ENCODE measurements at regions of chr6 and their contacts with region 1.

Region 1: DNA sequence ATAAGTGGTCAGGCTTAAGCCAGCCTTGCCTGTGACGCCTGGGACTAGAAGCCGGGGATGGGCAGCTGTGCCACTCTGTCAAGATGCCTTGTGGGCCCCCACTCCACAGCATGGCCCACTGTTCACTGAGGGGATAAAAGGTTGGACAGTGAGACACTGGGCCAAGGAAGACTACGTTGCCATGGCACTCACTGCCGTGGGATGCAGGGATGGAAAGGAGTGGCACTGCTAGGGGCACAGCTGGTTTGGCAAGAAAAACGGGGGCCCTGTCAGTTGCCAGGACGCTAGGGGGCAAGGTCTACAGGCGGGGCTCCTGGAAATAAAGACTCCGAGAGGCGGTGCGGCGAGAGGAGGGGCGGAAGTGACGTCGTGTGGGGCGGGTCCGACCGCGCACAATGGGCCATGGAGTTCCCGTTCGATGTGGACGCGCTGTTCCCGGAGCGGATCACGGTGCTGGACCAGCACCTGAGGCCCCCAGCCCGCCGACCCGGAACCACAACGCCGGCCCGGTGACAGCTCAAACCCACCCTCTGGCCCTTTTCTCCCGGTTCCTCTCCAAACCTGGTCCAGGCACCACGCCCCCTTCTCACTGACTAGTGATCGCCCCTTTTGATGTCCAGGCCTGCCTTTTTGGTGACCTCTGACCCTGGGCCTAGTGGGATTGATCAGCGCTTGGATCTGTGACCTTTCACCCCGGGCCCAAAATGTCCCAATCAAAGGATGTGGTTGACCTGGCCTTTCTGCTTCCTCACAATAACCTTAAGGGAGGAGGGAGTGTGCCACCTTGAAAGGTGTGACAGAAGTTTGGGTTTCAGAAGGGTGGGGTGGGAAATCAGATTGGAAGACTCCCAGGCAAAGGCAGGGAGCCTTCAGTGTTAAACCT is at the start of gene ATAT1:
- DNase-seq: peak; percentile 77 to 95 (median 86)
- ATAC-seq: peak; percentile 99
- H3K4me3 ChIP-seq: peak within 1 kb of the TSS; percentile 81
- H3K4me3 Mint-ChIP-seq: peak within 1 kb of the TSS; percentile 92
- H3K27ac ChIP-seq: peak within 1 kb of the TSS; percentile 68 to 91
- H3K27ac Mint-ChIP-seq: peak within 1 kb of the TSS; percentile 93
- H3K4me1 ChIP-seq: peaks cover 16% of the 10 kb centered on the region
- H3K4me1 Mint-ChIP-seq: peaks cover 20% of the 10 kb centered on the region
- H3K27me3 ChIP-seq: no peaks in the 10 kb centered on the region
- H3K27me3 Mint-ChIP-seq: no peaks in the 10 kb centered on the region
- CTCF ChIP-seq: peak; percentile 64
- total RNA-seq, gene ATAT1: 4.1 to 5.2 TPM

Region 2: GRCh38 chr6:30340589-30341054 is 286.1 kb before region 1 on chr6:
- CTCF ChIA-PET with region 1: no interaction called
- POLR2A ChIA-PET with region 1: no interaction called
- intact Hi-C with region 1: no loop called
- DNase-seq: no peak
- ATAC-seq: no peak
- H3K4me3 ChIP-seq: no peak overlapping the region
- H3K4me3 Mint-ChIP-seq: no peak overlapping the region
- H3K27ac ChIP-seq: no peak overlapping the region
- H3K27ac Mint-ChIP-seq: no peak overlapping the region
- H3K4me1 ChIP-seq: peaks cover 8% of the 10 kb centered on the region
- H3K4me1 Mint-ChIP-seq: peaks cover 13% of the 10 kb centered on the region
- H3K27me3 ChIP-seq: no peaks in the 10 kb centered on the region
- H3K27me3 Mint-ChIP-seq: no peaks in the 10 kb centered on the region
- CTCF ChIP-seq: no peak

Region 3: GRCh38 chr6:30646458-30647241 is 19.9 kb after region 1 on chr6 and contains the start of gene C6orf136:
- CTCF ChIA-PET with region 1: interaction called, 3 read pairs
- POLR2A ChIA-PET with region 1: no interaction called
- intact Hi-C with region 1: loop called in 1 of 2 experiments (anchors 1 kb)
- DNase-seq: peak; percentile 84 to 99 (median 94)
- ATAC-seq: peak; percentile 79
- H3K4me3 ChIP-seq: peak within 1 kb of the TSS; percentile 85
- H3K4me3 Mint-ChIP-seq: peak within 1 kb of the TSS; percentile 93
- H3K27ac ChIP-seq: peak within 1 kb of the TSS; percentile 86 to 91
- H3K27ac Mint-ChIP-seq: peak within 1 kb of the TSS; percentile 89
- H3K4me1 ChIP-seq: peaks cover 23% of the 10 kb centered on the region
- H3K4me1 Mint-ChIP-seq: peaks cover 23% of the 10 kb centered on the region
- H3K27me3 ChIP-seq: no peaks in the 10 kb centered on the region
- H3K27me3 Mint-ChIP-seq: no peaks in the 10 kb centered on the region
- CTCF ChIP-seq: no peak
- total RNA-seq, gene C6orf136: 20.3 to 21.7 TPM

Region 4: DNA sequence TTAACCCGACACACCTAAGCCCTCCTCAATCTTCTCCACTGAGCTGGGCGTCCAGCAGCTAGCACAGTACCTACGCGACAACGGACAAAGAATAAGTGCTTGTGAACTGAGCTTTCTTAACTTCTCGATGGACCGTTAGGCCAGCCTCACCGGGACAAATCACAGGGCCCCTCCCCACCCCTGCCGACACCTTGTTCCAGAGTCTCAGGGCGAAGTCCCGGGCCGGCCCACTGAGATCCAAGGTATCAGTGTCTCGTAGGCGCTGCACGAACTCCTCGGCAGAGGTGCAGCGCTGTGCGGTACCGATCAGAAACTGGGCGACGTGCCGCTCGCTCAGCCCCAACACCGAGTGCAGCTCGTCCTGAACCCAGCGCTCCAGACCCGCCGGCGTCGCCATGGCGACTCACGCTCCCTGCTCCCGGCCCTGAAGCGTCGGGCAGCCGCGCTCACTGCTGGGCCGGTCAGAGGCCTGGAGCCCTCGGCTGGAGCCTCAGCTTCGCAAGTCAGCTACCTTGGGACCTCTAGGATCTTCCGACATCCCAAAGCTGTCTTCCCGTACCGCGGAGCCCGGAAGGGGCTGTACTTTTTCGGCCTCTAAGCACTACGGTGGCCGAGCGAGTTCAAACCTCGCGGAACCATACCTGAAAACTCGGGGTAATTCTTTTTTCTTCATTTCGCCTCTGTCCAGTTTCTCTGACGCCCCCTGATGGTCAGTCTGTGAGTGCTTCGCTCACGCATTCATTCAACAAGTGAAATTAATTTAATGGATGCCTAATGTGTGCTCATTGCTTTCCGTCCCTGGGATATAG is 45.9 kb after region 1 on chr6 and contains the start of gene DHX16:
- CTCF ChIA-PET with region 1: interaction called, 3 read pairs
- POLR2A ChIA-PET with region 1: no interaction called
- intact Hi-C with region 1: loop called (anchors 2 to 5 kb)
- DNase-seq: peak; percentile 79 to 95 (median 84)
- ATAC-seq: peak; percentile 76
- H3K4me3 ChIP-seq: peak within 1 kb of the TSS; percentile 98
- H3K4me3 Mint-ChIP-seq: peak within 1 kb of the TSS; percentile 87
- H3K27ac ChIP-seq: peak within 1 kb of the TSS; percentile 49 to 59
- H3K27ac Mint-ChIP-seq: peak within 1 kb of the TSS; percentile 86
- H3K4me1 ChIP-seq: peaks cover 18% of the 10 kb centered on the region
- H3K4me1 Mint-ChIP-seq: peaks cover 49% of the 10 kb centered on the region
- H3K27me3 ChIP-seq: no peaks in the 10 kb centered on the region
- H3K27me3 Mint-ChIP-seq: no peaks in the 10 kb centered on the region
- CTCF ChIP-seq: peak; percentile 69
- total RNA-seq, gene DHX16: 15.9 to 16.1 TPM

Region 5: DNA sequence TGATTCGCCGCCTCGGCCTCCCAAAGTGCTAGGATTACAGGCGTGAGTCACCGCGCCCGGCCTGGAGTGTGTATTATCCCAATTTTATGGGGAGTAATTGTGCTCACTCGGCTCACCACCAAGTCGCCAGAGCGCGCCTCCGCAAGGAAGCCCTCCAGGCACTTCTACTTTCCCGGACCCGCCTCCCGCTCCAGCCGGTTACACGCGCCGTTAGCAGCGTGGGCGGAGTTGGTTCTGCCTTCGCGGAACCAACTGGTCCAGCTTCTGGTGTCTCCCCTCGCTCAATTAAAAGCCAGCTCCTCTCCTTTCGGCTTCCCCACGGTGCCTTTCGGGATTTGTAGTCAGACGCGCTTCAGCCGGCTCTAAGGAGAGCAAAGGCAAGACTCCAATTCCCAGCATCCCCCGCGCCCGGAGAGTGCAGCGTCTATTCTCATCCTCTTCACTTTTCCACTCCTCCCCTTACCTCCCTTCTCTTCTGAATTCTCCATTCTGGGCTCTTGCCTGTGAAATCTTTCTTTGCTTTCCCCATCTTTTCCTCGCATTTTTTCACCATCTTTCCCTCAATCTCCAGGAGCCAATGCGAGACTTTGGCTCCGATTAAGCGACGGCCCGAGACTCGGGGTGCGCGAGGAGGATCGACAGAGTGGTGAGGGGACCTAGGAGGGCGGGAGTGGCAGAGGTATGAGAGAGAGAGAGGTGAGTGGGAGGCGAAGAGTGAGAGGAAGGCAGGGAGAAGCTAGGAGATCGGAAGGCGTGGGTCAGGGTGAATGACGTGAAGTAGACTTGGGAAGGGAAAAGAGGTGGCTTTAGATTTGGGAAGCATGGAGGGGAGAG is 281.2 kb after region 1 on chr6 and contains the start of gene GTF2H4:
- CTCF ChIA-PET with region 1: no interaction called
- POLR2A ChIA-PET with region 1: no interaction called
- intact Hi-C with region 1: loop called in 1 of 2 experiments (anchors 5 kb)
- DNase-seq: peak; percentile 90 to 97 (median 94)
- ATAC-seq: peak; percentile 99
- H3K4me3 ChIP-seq: peak within 1 kb of the TSS; percentile 81
- H3K4me3 Mint-ChIP-seq: peak within 1 kb of the TSS; percentile 98
- H3K27ac ChIP-seq: no peak within 1 kb of the TSS
- H3K27ac Mint-ChIP-seq: peak within 1 kb of the TSS; percentile 71
- H3K4me1 ChIP-seq: peaks cover 15% of the 10 kb centered on the region
- H3K4me1 Mint-ChIP-seq: peaks cover 16% of the 10 kb centered on the region
- H3K27me3 ChIP-seq: no peaks in the 10 kb centered on the region
- H3K27me3 Mint-ChIP-seq: no peaks in the 10 kb centered on the region
- CTCF ChIP-seq: no peak
- total RNA-seq, gene GTF2H4: 7.7 to 10.7 TPM

Measured in CD4-positive, alpha-beta T cell (primary cell).